ENCODE measurements at regions of chr13 and their contacts with region 1.

Region 1: GRCh38 chr13:102680842-102681740 is 13.8 kb downstream of the METTL21C start:
- DNase-seq: no peak
- H3K4me3 Mint-ChIP-seq: peak overlapping the region; percentile 35
- H3K27ac Mint-ChIP-seq: peak overlapping the region; percentile 54
- H3K4me1 Mint-ChIP-seq: peaks cover 41% of the 10 kb centered on the region
- H3K27me3 Mint-ChIP-seq: no peaks in the 10 kb centered on the region

Region 2: GRCh38 chr13:102707465-102707864 is 26.4 kb after region 1 on chr13:
- intact Hi-C with region 1: no loop called
- DNase-seq: no peak
- H3K4me3 Mint-ChIP-seq: no peak overlapping the region
- H3K27ac Mint-ChIP-seq: no peak overlapping the region
- H3K4me1 Mint-ChIP-seq: no peaks in the 10 kb centered on the region
- H3K27me3 Mint-ChIP-seq: peaks cover 40% of the 10 kb centered on the region

Region 3: GRCh38 chr13:102773441-102774215 is 92.5 kb after region 1 on chr13 and contains the start of gene TEX30:
- intact Hi-C with region 1: loop called (anchors 5 kb)
- DNase-seq: peak; percentile 89
- H3K4me3 Mint-ChIP-seq: peak within 1 kb of the TSS; percentile 95
- H3K27ac Mint-ChIP-seq: peak within 1 kb of the TSS; percentile 95
- H3K4me1 Mint-ChIP-seq: peaks cover 66% of the 10 kb centered on the region
- H3K27me3 Mint-ChIP-seq: no peaks in the 10 kb centered on the region
- total RNA-seq, gene TEX30: 60.2 and 66.0 TPM in 2 replicates

Region 4: DNA sequence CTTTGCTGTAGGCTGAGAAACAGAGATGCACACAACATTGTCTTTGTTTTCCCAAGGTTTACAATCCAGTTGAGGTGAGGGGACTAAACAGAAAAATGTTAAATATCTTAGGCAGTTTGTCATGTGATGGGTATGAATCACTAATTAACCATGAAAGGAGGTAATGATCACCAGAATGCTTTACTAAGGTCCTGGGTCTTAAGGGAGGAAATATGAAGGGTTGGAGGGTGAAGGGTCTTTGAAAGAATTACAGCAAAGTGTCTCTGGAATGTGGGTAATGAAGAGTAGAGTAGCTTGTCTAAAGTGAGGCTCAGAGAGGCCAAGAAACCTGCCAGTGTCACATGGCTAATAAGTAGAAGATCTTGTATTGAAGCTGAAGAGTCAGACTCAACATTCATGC is 136.8 kb after region 1 on chr13:
- intact Hi-C with region 1: no loop called
- DNase-seq: no peak
- H3K4me3 Mint-ChIP-seq: no peak overlapping the region
- H3K27ac Mint-ChIP-seq: no peak overlapping the region
- H3K4me1 Mint-ChIP-seq: peaks cover 18% of the 10 kb centered on the region
- H3K27me3 Mint-ChIP-seq: no peaks in the 10 kb centered on the region

Region 5: DNA sequence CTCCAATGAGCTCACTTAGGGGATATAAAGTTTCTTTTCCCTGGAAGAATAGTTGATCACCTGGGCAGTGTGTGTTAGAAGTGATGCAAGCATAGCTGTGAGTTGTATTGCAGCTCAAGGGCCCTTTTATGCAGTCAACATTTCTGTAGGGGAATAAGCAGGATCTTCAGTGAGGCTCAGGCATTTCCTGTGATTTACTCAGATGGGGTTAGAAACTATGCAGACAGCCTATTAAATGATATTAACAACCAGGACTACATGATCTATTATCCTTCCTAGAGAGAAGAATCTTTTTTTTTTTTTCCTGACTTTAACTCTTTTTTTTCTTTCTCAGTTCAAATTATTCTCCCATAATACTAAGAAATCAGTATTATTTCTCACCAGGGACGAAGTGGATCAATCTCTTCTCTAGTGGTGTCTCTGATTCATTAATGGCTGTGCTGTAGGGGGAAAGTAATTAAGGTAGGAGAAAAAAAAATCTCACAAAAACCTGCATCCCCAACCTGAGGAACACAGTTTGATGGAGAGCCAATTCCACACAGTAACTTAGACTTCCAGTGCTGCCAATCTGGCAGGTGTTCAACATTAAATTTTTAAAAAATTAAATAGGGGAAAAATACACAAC is 511.5 kb after region 1 on chr13:
- intact Hi-C with region 1: no loop called
- DNase-seq: no peak
- H3K4me3 Mint-ChIP-seq: no peak overlapping the region
- H3K27ac Mint-ChIP-seq: no peak overlapping the region
- H3K4me1 Mint-ChIP-seq: no peaks in the 10 kb centered on the region
- H3K27me3 Mint-ChIP-seq: no peaks in the 10 kb centered on the region

Region 6: DNA sequence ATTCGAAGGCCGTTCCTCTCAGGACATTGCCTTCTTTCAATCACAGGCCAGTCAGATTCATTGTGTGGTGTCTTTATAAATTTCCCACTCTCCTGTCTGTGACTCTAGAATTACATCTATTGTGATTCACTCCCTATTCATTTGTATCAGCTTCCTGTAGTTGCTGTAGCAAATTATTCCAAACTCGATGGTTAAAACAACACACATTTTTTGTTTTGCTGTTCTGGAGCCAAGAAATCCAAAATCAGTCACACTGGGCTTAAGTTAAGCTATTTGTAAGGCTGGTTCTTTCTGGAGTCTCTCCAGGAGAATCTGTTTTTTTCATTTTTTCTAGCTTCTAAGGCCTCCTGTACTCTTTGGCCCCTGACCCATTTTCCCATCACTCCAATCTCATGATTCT is 1872.1 kb after region 1 on chr13:
- intact Hi-C with region 1: no loop called
- DNase-seq: no peak
- H3K4me3 Mint-ChIP-seq: no peak overlapping the region
- H3K27ac Mint-ChIP-seq: no peak overlapping the region
- H3K4me1 Mint-ChIP-seq: no peaks in the 10 kb centered on the region
- H3K27me3 Mint-ChIP-seq: no peaks in the 10 kb centered on the region